Esophagus squamous epithelium (tissue), 5 donors: ENCODE measurements at regions of chr17 and their contacts with region 1.

Region 1: DNA sequence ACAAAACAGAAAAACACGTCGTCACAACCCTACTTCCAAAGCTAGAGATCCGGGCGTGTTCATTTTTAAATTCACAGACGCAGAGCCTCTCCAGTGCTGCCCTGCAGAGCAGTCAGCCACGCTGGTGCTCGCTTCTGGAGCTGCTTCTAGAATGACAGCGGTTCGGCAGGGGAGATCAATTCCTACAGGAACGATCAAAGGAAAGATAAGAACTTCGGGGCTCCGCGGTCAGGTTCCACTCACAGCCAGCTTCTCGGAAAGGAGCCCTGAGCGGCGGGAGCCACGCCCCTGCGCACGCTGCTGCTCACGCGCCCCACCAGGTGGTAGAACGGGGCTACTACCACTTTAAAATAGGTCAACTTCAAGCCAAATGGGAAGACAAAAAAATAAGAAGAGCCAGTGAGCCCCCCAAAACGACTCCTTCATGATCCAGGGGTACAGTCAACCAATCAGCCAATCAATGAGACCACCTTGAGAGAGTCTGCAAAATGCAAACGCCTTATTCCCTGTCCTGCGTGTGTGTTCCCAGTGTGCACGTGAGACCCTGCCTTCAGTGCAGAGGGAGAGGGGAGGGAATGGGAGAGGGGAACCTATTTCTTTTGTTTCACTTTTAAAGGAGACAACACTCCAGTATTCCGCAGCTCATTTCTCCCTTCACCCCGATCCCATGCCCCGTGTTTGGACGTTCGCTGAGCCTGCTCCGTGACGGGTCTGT is 209.7 kb downstream of the RBFOX3 start:
- DNase-seq: no peak
- H3K4me3 ChIP-seq: peak overlapping the region in 3 of 4 donors; percentile 17 to 60 (median 34)
- H3K27ac ChIP-seq: no peak overlapping the region
- H3K4me1 ChIP-seq: peaks cover 0 to 17% (median 6%) of the 10 kb centered on the region in 3 donors
- H3K27me3 ChIP-seq: peaks cover 0 to 97% (median 8%) of the 10 kb centered on the region in 4 donors
- CTCF ChIP-seq: peak; percentile 80 to 90 (median 82)
- POLR2A ChIP-seq: no peak

Region 2: DNA sequence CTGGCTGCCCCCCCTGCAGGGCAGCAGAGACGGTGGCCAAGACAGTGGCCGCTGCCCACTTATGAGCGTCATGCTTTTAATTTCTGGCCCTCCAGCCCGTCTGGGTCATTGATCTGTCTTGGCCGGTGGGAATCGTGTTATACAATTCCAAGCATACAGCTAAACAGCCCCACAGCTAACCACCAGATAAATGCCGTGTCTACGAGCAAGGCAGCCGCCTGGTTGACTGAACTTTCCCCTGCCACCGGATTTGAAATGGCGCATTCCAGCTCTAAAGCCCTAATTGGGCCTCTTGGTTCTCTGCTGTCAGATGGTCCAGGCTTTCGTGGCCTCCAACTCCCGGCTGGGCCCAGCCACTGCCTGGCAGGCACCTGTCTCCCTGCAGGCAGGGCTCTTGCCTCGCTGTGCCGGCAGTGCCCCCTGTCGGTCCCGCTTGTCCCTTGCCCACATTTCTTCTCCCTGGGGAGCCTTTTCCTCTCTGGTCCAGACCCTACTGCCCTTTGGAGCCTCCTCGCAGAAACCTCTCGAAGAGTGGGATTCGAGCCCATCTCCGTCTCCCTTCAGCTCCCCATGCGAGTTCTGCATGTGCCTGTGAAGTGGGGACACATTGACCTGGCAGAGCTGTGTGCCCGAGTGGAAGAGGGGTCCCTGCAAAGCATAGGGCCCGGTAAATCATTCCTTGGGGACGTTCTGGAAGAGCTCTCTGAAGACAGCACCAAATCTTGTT is 211.5 kb after region 1 on chr17:
- intact Hi-C with region 1: loop called (anchors 10 kb)
- DNase-seq: no peak
- H3K4me3 ChIP-seq: no peak overlapping the region
- H3K27ac ChIP-seq: peak overlapping the region in 2 of 4 donors; percentile 45 to 52
- H3K4me1 ChIP-seq: peaks cover 0 to 49% (median 0%) of the 10 kb centered on the region in 3 donors
- H3K27me3 ChIP-seq: peaks cover 6 to 100% (median 26%) of the 10 kb centered on the region in 4 donors
- CTCF ChIP-seq: peak in 4 of 6 experiments; percentile 51 to 71 (median 54)
- POLR2A ChIP-seq: no peak